Heart right ventricle (tissue), 16 donors: ENCODE measurements at regions of chr7 and their contacts with region 1.

Region 1: GRCh38 chr7:29304756-29305155 is 110.2 kb downstream of the CHN2 start:
- DNase-seq: peak in 1 of 2 donors; percentile 56
- ATAC-seq: peak; percentile 74 to 89 (median 82)
- H3K4me3 ChIP-seq: no peak overlapping the region
- H3K27ac ChIP-seq: peak overlapping the region in 2 of 10 donors; percentile 29 to 46
- H3K4me1 ChIP-seq: peaks cover 0 to 34% (median 17%) of the 10 kb centered on the region in 9 donors
- H3K27me3 ChIP-seq: no peaks in the 10 kb centered on the region
- CTCF ChIP-seq: no peak

Region 2: DNA sequence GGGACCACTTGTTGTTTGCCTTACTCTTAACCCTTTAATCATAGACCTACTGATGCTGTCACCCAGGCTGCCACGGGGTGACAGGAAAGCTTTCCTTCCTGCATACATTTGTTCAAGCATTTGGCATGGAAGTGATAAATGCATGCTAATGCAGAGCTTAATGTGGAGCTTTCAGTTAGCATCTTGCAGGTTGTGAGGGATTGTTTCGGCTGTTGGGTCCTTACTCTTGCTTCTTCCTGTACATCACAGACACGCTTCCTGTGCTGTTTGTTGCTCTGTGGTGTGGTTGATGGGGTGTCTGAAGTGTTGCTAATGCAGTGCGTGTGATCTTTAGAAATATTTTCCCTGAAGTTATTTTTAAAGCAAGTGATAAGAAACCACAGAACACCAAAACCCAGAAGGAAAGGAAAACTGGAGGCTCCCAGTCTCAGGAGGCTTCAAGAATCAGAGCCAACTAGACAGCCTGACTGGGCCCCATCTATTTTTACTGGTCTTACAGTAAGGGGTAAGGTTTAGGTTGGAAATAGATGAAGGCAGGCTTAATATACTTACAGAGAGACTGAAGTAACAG is 32.9 kb after region 1 on chr7:
- intact Hi-C with region 1: loop called in 1 of 10 experiments (anchors 5 kb)
- DNase-seq: no peak
- ATAC-seq: peak in 7 of 8 donors; percentile 36 to 63 (median 57)
- H3K4me3 ChIP-seq: no peak overlapping the region
- H3K27ac ChIP-seq: peak overlapping the region in 2 of 10 donors; percentile 16 to 41
- H3K4me1 ChIP-seq: peaks cover 0 to 30% (median 18%) of the 10 kb centered on the region in 9 donors
- H3K27me3 ChIP-seq: no peaks in the 10 kb centered on the region
- CTCF ChIP-seq: no peak

Region 3: DNA sequence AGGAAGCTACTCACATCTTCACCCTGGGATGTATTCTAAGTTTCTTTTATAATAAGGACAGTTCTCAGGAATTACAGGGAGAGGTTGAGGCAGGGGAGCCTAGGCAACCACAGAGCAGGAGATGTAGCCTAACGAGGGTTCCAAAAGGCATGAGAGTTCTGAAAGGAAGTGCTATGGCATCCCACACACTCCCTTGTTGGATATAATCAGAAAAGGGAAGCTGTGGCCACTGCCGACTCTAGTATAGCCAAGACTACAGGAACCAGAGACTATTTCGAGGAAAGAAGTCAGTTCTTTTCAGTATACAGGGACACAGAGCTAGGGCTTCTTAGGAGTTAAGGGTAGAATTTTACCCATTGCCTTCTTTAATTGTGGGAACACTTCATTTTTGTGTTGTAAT is 269.9 kb after region 1 on chr7:
- intact Hi-C with region 1: no loop called
- DNase-seq: no peak
- ATAC-seq: no peak
- H3K4me3 ChIP-seq: no peak overlapping the region
- H3K27ac ChIP-seq: no peak overlapping the region
- H3K4me1 ChIP-seq: no peaks in the 10 kb centered on the region
- H3K27me3 ChIP-seq: peaks cover 0 to 23% (median 6%) of the 10 kb centered on the region in 7 donors
- CTCF ChIP-seq: no peak